AG04449 (cell line): ENCODE measurements at regions of chr21 and their contacts with region 1.

Region 1: GRCh38 chr21:42593007-42593806 is 60.2 kb upstream of the PDE9A start:
- DNase-seq: no peak
- H3K4me3 ChIP-seq: no peak overlapping the region
- CTCF ChIP-seq: peak; percentile 61

Region 2: DNA sequence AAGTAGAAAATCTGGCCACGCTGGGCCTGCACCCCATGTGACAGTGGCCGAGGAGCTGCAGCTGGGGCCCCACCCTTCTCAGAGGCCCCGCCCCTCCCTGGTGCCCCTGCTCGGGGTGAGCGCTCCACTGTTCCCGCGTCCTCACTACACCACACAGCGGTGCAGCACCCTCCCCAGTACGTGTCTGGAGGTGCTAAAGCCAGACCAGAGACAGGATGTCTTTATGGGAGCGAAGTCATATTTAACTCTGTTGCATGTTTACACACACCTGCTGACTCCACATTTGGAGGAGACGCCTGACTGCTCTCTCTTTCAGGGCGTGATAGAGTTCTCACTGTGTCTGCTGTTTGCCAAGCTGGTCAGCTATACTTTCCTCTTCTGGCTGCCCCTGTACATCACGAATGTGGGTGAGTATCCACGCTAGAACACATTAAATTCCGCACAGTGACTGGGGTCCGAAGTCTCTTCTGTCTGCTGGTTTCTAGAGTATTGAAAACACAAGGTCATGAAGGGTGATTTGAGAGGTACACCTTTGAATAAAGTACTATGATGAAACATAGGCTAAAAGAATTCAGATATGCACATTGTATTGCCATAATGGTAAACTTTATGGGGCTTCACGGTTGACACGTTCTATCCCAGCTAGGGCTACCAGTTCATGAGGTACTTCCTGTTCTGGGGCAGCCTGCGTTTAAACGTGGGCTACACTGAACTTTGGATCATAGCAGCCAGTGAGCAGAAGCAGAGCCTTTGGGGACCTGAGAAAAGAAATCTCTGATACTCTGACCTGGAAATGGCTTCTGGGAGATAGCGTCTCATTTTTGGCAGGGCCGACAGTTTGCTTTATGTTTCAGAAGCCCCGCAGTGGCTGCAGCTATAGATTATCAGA is 31.2 kb before region 1 on chr21:
- CTCF ChIA-PET with region 1: no interaction called
- POLR2A ChIA-PET with region 1: no interaction called
- DNase-seq: no peak
- H3K4me3 ChIP-seq: no peak overlapping the region
- CTCF ChIP-seq: no peak

Region 3: DNA sequence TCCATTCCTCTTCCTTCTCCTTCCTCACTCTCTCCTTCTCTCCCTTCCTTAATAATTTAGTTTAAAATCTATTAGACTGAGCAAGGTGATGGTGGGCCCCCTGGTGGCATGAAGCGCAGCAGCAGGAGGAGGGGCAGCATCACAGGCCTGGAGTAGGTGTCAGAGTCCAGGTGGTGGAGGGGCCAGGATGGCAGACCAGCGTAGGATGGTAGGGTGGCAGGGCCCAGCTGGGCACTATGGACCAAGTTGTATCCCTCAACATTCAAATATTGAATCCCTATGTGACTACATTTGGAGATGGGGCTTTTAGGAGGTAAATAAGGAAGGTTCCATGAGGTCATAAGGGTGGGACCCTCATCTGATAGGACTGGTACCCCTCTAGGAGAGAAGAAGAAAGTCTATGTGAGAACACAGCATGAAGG is 225.1 kb after region 1 on chr21:
- CTCF ChIA-PET with region 1: interaction called, 12 read pairs
- POLR2A ChIA-PET with region 1: no interaction called
- DNase-seq: no peak
- H3K4me3 ChIP-seq: no peak overlapping the region
- CTCF ChIP-seq: peak; percentile 77